ENCODE measurements at regions of chr2 and their contacts with region 1.

Region 1: GRCh38 chr2:221156062-221156742 is 415.9 kb downstream of the EPHA4 start:
- DNase-seq: peak; percentile 47
- H3K4me3 ChIP-seq: no peak overlapping the region
- H3K27ac ChIP-seq: no peak overlapping the region
- H3K4me1 ChIP-seq: peaks cover 44% of the 10 kb centered on the region
- H3K27me3 ChIP-seq: no peaks in the 10 kb centered on the region
- CTCF ChIP-seq: no peak

Region 2: GRCh38 chr2:220029013-220029412 is 1127.2 kb before region 1 on chr2:
- CTCF ChIA-PET with region 1: no interaction called
- POLR2A ChIA-PET with region 1: no interaction called
- intact Hi-C with region 1: no loop called
- DNase-seq: no peak
- H3K4me3 ChIP-seq: no peak overlapping the region
- H3K27ac ChIP-seq: no peak overlapping the region
- H3K4me1 ChIP-seq: no peaks in the 10 kb centered on the region
- H3K27me3 ChIP-seq: no peaks in the 10 kb centered on the region
- CTCF ChIP-seq: no peak

Region 3: GRCh38 chr2:220930271-220931076 is 225.7 kb before region 1 on chr2:
- CTCF ChIA-PET with region 1: no interaction called
- POLR2A ChIA-PET with region 1: interaction called, 14 read pairs
- intact Hi-C with region 1: no loop called
- DNase-seq: no peak
- H3K4me3 ChIP-seq: no peak overlapping the region
- H3K27ac ChIP-seq: no peak overlapping the region
- H3K4me1 ChIP-seq: no peaks in the 10 kb centered on the region
- H3K27me3 ChIP-seq: no peaks in the 10 kb centered on the region
- CTCF ChIP-seq: no peak

Measured in A673 (cell line).